GM10248 (cell line): ENCODE measurements at regions of chr1 and their contacts with region 1.

Region 1: GRCh38 chr1:152640351-152640750 is 17.4 kb upstream of the LCE3A start:
- DNase-seq: no peak
- CTCF ChIP-seq: no peak

Region 2: DNA sequence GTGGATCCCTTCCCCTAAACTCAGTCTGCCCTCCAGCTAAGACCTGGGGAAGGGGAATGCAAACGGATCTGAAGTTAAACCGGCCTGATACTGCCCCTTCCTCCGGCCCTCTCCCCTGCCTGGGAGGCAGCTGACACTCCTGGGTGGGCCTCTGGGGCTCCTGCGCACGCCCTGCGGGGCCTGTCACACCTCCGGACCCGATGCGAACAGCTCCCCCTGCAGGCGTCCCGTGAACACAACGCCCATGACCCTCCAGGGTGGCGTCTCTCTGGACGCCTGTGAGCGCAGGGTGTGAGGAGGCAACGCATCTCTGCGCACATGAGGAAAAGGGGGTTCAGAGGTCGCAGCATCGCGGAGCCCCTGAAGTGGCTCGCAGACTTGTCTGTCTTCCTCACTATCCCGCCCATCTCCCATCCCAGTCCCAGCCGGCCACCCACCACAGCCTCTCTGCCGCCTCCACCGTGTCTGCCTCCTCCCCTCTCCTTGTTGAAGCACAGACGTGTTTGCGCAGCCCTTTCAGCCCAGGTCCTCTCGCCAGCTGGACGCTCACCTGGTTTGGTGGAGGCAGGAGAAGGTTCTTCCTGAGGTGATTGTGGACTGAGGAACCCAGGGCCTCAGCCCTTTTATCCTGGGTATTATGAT is 17.0 kb before region 1 on chr1:
- CTCF ChIA-PET with region 1: no interaction called
- POLR2A ChIA-PET with region 1: no interaction called
- DNase-seq: peak; percentile 39
- CTCF ChIP-seq: peak; percentile 29

Region 3: GRCh38 chr1:152654110-152654509 is 13.8 kb after region 1 on chr1:
- CTCF ChIA-PET with region 1: interaction called, 30 read pairs
- POLR2A ChIA-PET with region 1: no interaction called
- DNase-seq: peak; percentile 49
- CTCF ChIP-seq: peak; percentile 66

Region 4: GRCh38 chr1:152725261-152725660 is 84.9 kb after region 1 on chr1:
- CTCF ChIA-PET with region 1: no interaction called
- POLR2A ChIA-PET with region 1: no interaction called
- DNase-seq: no peak
- CTCF ChIP-seq: no peak